Dendritic cell treated with granulocyte-macrophage colony-stimulating factor and Interleukin-4, amounts not matched to agents 40 ng/mL and 50 ng/mL, for 4 days (primary cell): ENCODE measurements at regions of chr1 and their contacts with region 1.

Region 1: GRCh38 chr1:75785983-75786853 is at the start of gene RABGGTB:
- H3K4me3 Mint-ChIP-seq: peak within 1 kb of the TSS; percentile 93
- H3K27ac Mint-ChIP-seq: peak within 1 kb of the TSS; percentile 97
- H3K4me1 Mint-ChIP-seq: peaks cover 54% of the 10 kb centered on the region
- H3K27me3 Mint-ChIP-seq: no peaks in the 10 kb centered on the region

Region 2: GRCh38 chr1:74197657-74198552 is 1588.3 kb before region 1 on chr1 and contains the starts of genes FPGT and LRRIQ3:
- intact Hi-C with region 1: loop called (anchors 5 kb)
- H3K4me3 Mint-ChIP-seq: peak within 1 kb of the TSS; percentile 88
- H3K27ac Mint-ChIP-seq: peak within 1 kb of the TSS; percentile 91
- H3K4me1 Mint-ChIP-seq: peaks cover 6% of the 10 kb centered on the region
- H3K27me3 Mint-ChIP-seq: peaks cover 5% of the 10 kb centered on the region

Region 3: DNA sequence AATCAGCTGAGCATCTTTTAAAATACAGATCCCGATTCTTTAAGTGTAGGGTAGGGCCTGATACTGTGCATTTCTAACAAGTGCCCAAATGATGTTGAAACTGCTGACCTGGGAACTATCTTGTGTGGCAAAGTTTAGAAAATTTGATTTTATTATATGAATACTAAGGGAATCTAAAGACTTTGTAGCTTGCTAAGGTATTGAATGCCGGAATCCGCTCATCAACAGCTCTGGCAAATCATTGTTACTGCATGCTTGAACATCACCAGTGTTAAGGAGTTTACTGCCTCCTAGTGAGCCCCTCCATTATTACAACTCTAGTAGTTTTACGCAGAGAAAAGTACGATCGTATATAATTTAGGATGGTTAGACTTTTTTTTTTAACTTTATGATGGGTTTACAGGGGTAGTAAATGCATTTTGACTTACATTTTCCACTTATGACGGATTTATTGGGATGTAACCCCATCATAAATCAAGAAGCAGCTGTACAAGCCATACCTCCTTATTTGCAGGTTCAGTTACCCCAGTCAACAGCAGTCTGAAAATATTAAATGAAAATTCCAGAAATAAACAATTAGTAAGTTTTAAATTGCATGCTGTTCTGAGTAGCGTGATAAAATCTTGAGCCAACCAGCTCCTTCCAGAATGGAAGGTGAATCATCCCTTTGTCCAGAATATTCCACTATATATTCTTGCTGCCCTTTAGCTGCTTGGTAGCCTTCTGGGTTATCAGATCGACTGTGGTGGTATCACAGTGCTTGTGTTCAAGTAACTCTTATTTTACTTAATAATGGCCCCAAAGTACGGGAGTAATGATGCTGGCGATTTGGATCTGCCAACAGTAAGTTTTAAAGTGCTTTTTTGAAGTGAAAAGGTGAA is 1052.4 kb before region 1 on chr1:
- intact Hi-C with region 1: loop called (anchors 5 kb)
- H3K4me3 Mint-ChIP-seq: peak overlapping the region; percentile 89
- H3K27ac Mint-ChIP-seq: peak overlapping the region; percentile 91
- H3K4me1 Mint-ChIP-seq: peaks cover 31% of the 10 kb centered on the region
- H3K27me3 Mint-ChIP-seq: no peaks in the 10 kb centered on the region

Region 4: GRCh38 chr1:75724472-75725022 is 61.7 kb before region 1 on chr1 and contains the start of gene ACADM:
- intact Hi-C with region 1: loop called (anchors 1 kb)
- H3K4me3 Mint-ChIP-seq: peak within 1 kb of the TSS; percentile 91
- H3K27ac Mint-ChIP-seq: peak within 1 kb of the TSS; percentile 88
- H3K4me1 Mint-ChIP-seq: peaks cover 23% of the 10 kb centered on the region
- H3K27me3 Mint-ChIP-seq: no peaks in the 10 kb centered on the region

Region 5: GRCh38 chr1:76074321-76075187 is 288.3 kb after region 1 on chr1 and contains the start of gene ST6GALNAC3:
- intact Hi-C with region 1: loop called (anchors 5 kb)
- H3K4me3 Mint-ChIP-seq: peak within 1 kb of the TSS; percentile 93
- H3K27ac Mint-ChIP-seq: peak within 1 kb of the TSS; percentile 79
- H3K4me1 Mint-ChIP-seq: peaks cover 24% of the 10 kb centered on the region
- H3K27me3 Mint-ChIP-seq: peaks cover 11% of the 10 kb centered on the region